ENCODE measurements at regions of chr4 and their contacts with region 1.

Region 1: DNA sequence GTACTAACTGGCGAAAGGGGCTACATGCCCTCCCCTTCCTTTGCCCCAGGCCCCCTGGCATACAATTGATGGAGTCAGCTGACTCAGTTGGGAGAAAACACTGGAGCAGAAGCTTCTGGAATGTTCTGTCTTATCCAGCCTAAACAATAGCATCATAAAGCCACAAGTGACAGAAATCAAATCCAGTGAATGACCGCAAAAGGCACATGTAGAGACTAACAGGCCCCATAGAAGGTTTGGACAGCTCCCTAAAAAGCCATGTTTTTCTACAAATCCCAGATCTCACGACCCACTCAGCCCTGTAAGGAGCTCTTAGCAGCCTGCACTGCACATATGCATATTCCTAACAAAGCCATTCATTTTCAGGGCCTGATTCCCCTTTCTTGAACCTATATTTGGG is 25.1 kb downstream of the SCARB2 start:
- DNase-seq: no peak
- ATAC-seq: no peak
- H3K4me3 ChIP-seq: no peak overlapping the region
- H3K27ac ChIP-seq: no peak overlapping the region
- H3K4me1 ChIP-seq: peaks cover 0 to 33% (median 8%) of the 10 kb centered on the region in 12 donors
- H3K27me3 ChIP-seq: no peaks in the 10 kb centered on the region
- CTCF ChIP-seq: no peak
- POLR2A ChIP-seq: no peak

Region 2: DNA sequence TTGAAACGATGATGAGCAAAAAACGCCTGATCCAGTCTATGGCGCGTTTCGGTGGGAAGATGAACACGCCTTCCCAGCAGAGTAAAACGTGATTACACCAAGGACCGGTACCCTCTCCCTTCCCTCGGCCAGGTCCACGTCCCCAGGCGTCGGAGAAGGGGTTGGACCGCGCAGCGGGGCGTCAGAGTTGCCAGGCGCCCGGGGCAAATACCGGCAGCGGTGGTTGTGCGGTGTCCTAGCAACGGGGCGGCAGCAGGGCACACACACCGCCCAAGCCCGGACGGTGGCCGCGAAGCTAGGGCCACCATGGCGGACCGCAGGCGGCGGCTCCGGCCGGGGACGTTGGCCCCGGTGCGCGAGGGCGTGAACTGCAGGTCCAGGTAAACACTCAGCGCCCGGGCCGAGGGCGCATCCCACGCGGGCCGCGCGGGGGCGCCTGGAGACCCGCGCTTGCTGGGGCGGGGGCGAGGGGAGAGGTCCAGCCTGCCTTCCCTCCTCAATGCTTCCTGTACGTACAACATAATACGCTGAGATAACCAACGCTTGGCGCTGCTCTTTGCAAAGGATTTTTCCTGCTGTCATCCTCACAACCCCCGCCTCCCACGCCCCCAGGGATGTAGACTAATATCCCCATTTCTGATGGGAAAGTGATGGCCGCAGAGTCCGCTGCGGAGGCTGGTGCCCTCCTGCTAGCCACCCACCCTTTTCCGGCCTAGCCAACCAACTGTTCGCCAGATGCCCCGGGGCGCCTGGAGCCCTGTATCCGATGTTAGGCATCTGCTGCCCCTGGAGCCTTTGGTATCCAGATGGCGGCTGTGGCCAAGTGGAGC is 63.1 kb after region 1 on chr4 and contains the start of gene FAM47E:
- intact Hi-C with region 1: loop called in 8 of 10 experiments (anchors 5 to 10 kb)
- DNase-seq: peak; percentile 71 to 89 (median 87)
- ATAC-seq: peak; percentile 96 to 99 (median 99)
- H3K4me3 ChIP-seq: peak within 1 kb of the TSS; percentile 20 to 73 (median 63)
- H3K27ac ChIP-seq: peak within 1 kb of the TSS in 7 of 12 donors; percentile 4 to 62 (median 46)
- H3K4me1 ChIP-seq: peaks cover 0 to 17% (median 8%) of the 10 kb centered on the region in 12 donors
- H3K27me3 ChIP-seq: peaks cover 0 to 50% (median 0%) of the 10 kb centered on the region in 9 donors
- CTCF ChIP-seq: peak; percentile 9 to 59 (median 38)
- POLR2A ChIP-seq: peak in 1 of 2 donors; percentile 29
- total RNA-seq, gene FAM47E: 0.48 to 4.9 (median 2.5) TPM

Region 3: DNA sequence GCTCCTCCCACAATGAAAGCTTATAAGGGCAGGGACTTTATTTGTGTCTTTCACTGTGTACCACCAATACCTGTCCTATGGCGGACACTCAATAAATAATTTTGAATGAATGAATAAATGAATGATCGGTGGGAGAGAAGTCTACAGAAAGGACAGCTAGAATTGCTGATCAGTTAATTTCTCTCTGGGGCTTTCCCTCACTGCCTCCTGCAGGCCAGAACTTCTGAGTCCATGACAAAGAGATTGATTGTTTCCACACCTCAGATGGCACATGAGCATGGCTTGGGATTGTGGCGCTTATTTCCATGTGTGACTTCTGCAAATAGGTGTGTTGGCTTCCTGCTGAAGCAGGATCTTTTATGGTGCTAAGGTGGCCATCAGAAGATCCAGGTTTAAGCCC is 69.3 kb after region 1 on chr4:
- intact Hi-C with region 1: loop called in 7 of 10 experiments (anchors 5 to 10 kb)
- DNase-seq: no peak
- ATAC-seq: no peak
- H3K4me3 ChIP-seq: no peak overlapping the region
- H3K27ac ChIP-seq: no peak overlapping the region
- H3K4me1 ChIP-seq: no peaks in the 10 kb centered on the region
- H3K27me3 ChIP-seq: peaks cover 0 to 11% (median 0%) of the 10 kb centered on the region in 9 donors
- CTCF ChIP-seq: no peak
- POLR2A ChIP-seq: no peak

Region 4: DNA sequence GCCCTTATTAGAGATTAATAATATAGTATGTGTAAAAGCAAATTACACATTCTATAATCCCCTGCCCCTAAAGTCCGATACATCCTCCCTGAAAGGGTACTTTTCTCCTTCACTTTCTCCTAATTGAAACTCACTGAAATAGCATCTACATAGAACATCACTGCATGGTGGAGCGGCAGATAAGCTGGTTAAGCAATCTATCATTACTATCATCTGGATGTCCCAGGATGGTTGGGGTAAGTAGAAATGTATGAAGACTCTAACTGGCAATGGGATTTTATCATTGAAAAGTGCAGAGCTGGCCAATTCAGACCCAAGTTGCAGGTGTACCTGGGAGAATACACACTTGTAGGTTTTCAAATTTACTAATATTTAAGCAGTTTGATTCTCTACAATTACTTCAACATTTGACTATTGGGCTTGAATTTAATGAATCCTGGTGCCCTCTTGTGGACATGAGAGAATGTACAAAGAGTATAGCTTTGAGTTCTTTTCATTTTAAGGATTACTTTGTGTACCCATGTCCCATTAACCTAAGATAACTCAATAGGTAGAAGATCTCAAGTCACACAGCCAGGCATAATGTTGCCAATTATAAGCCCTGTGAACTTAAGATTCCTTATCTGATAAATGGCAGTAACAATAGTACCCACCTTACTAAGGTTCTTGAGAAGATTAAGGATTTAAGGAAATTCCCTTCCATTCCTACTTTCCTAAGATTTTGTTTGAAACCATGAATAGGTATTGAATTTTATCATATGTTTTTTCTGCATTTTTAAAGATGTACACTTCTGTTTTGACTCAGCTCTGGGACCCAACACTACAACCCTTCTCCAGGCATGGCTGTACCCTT is 316.3 kb after region 1 on chr4:
- intact Hi-C with region 1: loop called in 3 of 10 experiments (anchors 5 kb)
- DNase-seq: no peak
- ATAC-seq: peak in 2 of 4 donors; percentile 45 to 47
- H3K4me3 ChIP-seq: no peak overlapping the region
- H3K27ac ChIP-seq: no peak overlapping the region
- H3K4me1 ChIP-seq: no peaks in the 10 kb centered on the region
- H3K27me3 ChIP-seq: no peaks in the 10 kb centered on the region
- CTCF ChIP-seq: peak; percentile 49 to 78 (median 67)
- POLR2A ChIP-seq: no peak

Measured in heart left ventricle (tissue), 16 donors.